GM12878 (cell line): ENCODE measurements at regions of chr17 and their contacts with region 1.

Region 1: DNA sequence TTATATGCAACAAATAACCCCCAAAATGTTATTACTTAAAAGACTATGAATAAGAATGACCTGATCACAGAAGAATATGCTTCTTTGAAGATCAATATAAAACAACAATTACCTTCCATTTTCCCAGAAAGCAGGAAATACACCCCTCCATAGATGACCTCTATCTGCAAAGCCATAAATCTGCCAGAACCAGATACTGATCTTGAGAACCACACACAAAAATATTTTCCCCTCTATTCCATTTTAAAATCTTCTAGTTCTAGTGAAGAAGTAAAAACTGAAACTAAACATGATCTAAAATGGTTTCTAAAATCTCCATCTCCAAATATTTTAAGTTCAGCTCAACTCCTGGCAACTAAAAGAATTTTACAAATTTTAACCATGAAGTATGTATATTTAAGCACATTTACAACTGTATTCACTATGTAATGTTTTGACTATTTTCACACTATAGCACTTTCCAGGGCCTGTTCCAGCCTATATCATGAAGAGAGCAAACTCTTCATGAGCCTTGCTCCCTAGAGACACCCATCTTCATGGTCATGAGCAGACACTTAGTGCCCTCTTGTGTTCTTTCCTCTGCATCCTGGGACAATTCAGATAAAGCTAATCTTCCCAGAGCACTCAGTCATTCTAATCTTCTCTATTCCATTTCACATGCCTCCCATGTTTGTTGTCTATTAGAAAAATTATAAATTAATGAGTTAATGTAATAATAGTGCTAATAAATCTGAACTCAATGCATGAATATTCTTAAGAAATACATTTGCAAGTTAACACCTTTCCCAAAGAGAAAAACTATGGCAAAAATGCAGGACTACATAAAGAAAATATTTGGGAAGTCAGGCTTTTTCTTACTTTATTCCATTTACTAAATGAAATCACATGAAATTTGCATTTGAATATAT is 87.0 kb downstream of the HELZ start:
- DNase-seq: peak; percentile 2
- ATAC-seq: peak; percentile 72
- H3K4me3 ChIP-seq: no peak overlapping the region
- H3K27ac ChIP-seq: no peak overlapping the region
- H3K4me1 ChIP-seq: no peaks in the 10 kb centered on the region
- H3K27me3 ChIP-seq: no peaks in the 10 kb centered on the region
- CTCF ChIP-seq: peak; percentile 17 to 38 (median 37); a peak in 4 of 6 replicates
- EP300 ChIP-seq: no peak
- POLR2A ChIP-seq: no peak
- RAD21 ChIP-seq: peak; percentile 44

Region 2: GRCh38 chr17:67121316-67121887 is 36.6 kb before region 1 on chr17:
- CTCF ChIA-PET with region 1: interaction called, 3 read pairs
- POLR2A ChIA-PET with region 1: interaction called, 10 read pairs
- RAD21 ChIA-PET with region 1: no interaction called
- SMC1A ChIA-PET with region 1: interaction called, 6 read pairs
- in situ Hi-C with region 1: no loop called
- intact Hi-C with region 1: no loop called
- DNase-seq: no peak
- ATAC-seq: no peak
- H3K4me3 ChIP-seq: no peak overlapping the region
- H3K27ac ChIP-seq: no peak overlapping the region
- H3K4me1 ChIP-seq: no peaks in the 10 kb centered on the region
- H3K27me3 ChIP-seq: no peaks in the 10 kb centered on the region
- CTCF ChIP-seq: no peak
- EP300 ChIP-seq: no peak
- POLR2A ChIP-seq: no peak
- RAD21 ChIP-seq: no peak

Region 3: DNA sequence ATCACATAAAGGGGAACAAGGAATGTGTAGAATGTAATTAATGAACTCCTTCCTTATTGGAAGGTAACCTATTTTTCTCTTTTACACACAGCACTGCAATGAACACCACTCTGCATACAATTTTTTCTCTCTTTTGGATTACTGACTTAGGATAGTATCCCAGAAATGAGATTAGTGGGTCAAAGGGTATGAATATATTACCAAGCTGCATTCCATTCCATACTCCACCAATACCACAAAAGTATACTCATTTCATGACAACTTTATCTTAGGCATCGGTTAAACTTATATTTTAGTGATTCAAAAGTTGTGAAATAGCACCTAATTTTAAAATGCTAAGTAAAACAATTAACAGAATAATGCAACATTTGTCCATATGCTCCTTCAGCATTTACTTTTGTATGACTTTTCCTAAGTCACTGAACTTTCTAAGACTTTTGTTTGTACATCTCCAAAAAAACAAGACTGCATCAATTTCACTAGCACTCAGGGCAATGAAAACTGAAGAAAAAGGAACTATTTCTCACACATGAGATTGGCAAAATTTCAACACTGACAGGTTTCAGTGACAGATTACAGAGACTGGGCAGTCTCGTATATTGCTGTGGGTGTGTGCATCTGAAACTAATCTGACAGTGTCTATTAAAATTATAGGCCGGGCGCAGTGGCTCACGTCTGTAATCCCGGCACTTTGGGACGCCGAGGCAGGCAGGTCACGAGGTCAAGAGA is 54.9 kb after region 1 on chr17:
- CTCF ChIA-PET with region 1: no interaction called
- POLR2A ChIA-PET with region 1: no interaction called
- RAD21 ChIA-PET with region 1: no interaction called
- SMC1A ChIA-PET with region 1: no interaction called
- in situ Hi-C with region 1: no loop called
- intact Hi-C with region 1: no loop called
- DNase-seq: no peak
- ATAC-seq: peak; percentile 45
- H3K4me3 ChIP-seq: no peak overlapping the region
- H3K27ac ChIP-seq: no peak overlapping the region
- H3K4me1 ChIP-seq: no peaks in the 10 kb centered on the region
- H3K27me3 ChIP-seq: no peaks in the 10 kb centered on the region
- CTCF ChIP-seq: no peak
- EP300 ChIP-seq: no peak
- POLR2A ChIP-seq: no peak
- RAD21 ChIP-seq: no peak